A673 (cell line): ENCODE measurements at regions of chr2 and their contacts with region 1.

Region 1: GRCh38 chr2:13390676-13391075 is 673.9 kb downstream of the TRIB2 start:
- DNase-seq: no peak
- H3K4me3 ChIP-seq: no peak overlapping the region
- H3K27ac ChIP-seq: no peak overlapping the region
- H3K4me1 ChIP-seq: no peaks in the 10 kb centered on the region
- H3K27me3 ChIP-seq: no peaks in the 10 kb centered on the region
- CTCF ChIP-seq: no peak

Region 2: GRCh38 chr2:14616342-14616741 is 1225.7 kb after region 1 on chr2:
- CTCF ChIA-PET with region 1: interaction called, 10 read pairs
- POLR2A ChIA-PET with region 1: no interaction called
- intact Hi-C with region 1: no loop called
- DNase-seq: no peak
- H3K4me3 ChIP-seq: no peak overlapping the region
- H3K27ac ChIP-seq: no peak overlapping the region
- H3K4me1 ChIP-seq: no peaks in the 10 kb centered on the region
- H3K27me3 ChIP-seq: no peaks in the 10 kb centered on the region
- CTCF ChIP-seq: no peak